Activated CD4-positive, alpha-beta memory T cell treated with anti-CD3 and anti-CD28 coated beads for 36 hours (primary cell): ENCODE measurements at regions of chr11 and their contacts with region 1.

Region 1: GRCh38 chr11:102614485-102614884 is 10.6 kb downstream of the MMP20 start:
- DNase-seq: no peak
- H3K4me3 Mint-ChIP-seq: no peak overlapping the region
- H3K27ac Mint-ChIP-seq: no peak overlapping the region
- H3K4me1 Mint-ChIP-seq: peaks cover 10% of the 10 kb centered on the region
- H3K27me3 Mint-ChIP-seq: no peaks in the 10 kb centered on the region

Region 2: GRCh38 chr11:102268329-102269193 is 345.9 kb before region 1 on chr11:
- CTCF ChIA-PET with region 1: interaction called, 4 read pairs
- POLR2A ChIA-PET with region 1: interaction called, 5 read pairs
- intact Hi-C with region 1: loop called (anchors 5 kb)
- DNase-seq: peak; percentile 92
- H3K4me3 Mint-ChIP-seq: peak overlapping the region; percentile 24
- H3K27ac Mint-ChIP-seq: no peak overlapping the region
- H3K4me1 Mint-ChIP-seq: peaks cover 31% of the 10 kb centered on the region
- H3K27me3 Mint-ChIP-seq: no peaks in the 10 kb centered on the region

Region 3: GRCh38 chr11:102495161-102496042 is 119.1 kb before region 1 on chr11:
- CTCF ChIA-PET with region 1: interaction called, 23 read pairs
- POLR2A ChIA-PET with region 1: no interaction called
- intact Hi-C with region 1: loop called (anchors 2 kb)
- DNase-seq: peak; percentile 22
- H3K4me3 Mint-ChIP-seq: no peak overlapping the region
- H3K27ac Mint-ChIP-seq: no peak overlapping the region
- H3K4me1 Mint-ChIP-seq: peaks cover 18% of the 10 kb centered on the region
- H3K27me3 Mint-ChIP-seq: peaks cover 7% of the 10 kb centered on the region

Region 4: DNA sequence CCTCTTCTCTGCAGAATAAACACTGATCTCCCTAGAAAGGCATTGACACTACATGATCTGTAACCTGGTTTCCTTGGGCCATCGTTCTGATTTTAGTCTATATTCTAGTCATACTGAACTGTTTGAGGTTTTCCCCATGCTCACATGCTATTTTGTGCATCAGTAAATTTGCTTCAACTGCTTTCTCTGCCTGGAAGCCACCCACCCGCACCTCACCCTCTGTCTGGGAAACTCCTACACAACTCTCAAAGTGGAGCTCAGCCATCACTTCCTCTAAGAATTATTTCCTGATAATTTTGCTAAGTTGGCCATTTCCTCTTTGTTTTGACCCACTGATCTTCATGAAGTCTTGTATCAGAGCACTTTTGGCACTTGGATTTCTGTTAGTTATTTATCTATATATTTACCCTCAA is 25.4 kb before region 1 on chr11:
- CTCF ChIA-PET with region 1: interaction called, 9 read pairs
- POLR2A ChIA-PET with region 1: no interaction called
- intact Hi-C with region 1: loop called (anchors 2 kb)
- DNase-seq: peak; percentile 77
- H3K4me3 Mint-ChIP-seq: no peak overlapping the region
- H3K27ac Mint-ChIP-seq: peak overlapping the region; percentile 38
- H3K4me1 Mint-ChIP-seq: peaks cover 22% of the 10 kb centered on the region
- H3K27me3 Mint-ChIP-seq: peaks cover 1% of the 10 kb centered on the region

Region 5: DNA sequence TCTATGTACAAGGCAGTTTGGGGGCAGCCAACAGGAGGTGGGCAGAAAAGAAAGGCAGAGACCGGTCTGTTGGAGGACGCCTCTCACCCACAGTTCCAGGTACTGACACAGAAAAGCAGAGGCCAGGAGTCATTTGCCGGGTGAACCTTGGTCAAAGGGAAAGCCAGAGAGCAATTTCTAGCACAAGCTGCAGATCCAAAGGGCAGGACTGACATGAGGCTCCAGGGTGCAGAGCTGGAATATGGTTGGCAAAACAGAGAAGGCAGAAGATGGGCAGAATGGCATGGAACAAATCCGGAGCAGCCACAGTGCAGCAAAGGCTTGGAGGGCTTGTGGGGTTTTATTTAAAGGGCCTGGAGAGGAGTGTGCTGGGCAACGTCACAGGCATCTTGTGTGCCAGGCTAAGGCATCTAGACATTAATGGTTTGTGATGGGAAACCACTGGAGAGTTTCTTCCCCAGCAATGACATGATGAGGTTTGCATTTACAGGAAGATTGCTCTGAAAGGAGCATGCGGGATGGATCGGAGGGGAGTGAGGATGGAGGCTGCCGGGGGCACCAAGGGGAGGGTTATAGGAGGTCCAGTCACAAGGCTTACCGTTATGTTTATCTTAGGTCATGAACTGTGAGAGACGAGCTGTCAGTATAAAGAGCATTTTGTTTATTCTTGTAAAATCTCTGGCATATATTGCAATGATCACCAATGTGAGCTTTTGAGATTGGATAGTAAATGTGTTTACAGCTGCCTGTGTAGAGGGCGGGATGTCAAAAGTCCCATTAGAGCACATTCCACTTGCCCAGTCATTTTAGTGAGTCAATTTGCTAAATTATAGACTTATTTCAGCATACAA is 16.3 kb after region 1 on chr11:
- CTCF ChIA-PET with region 1: no interaction called
- POLR2A ChIA-PET with region 1: no interaction called
- intact Hi-C with region 1: no loop called
- DNase-seq: no peak
- H3K4me3 Mint-ChIP-seq: no peak overlapping the region
- H3K27ac Mint-ChIP-seq: no peak overlapping the region
- H3K4me1 Mint-ChIP-seq: no peaks in the 10 kb centered on the region
- H3K27me3 Mint-ChIP-seq: peaks cover 5% of the 10 kb centered on the region

Region 6: GRCh38 chr11:102666331-102666957 is 52.0 kb after region 1 on chr11:
- CTCF ChIA-PET with region 1: interaction called, 18 read pairs
- POLR2A ChIA-PET with region 1: no interaction called
- intact Hi-C with region 1: loop called (anchors 10 kb)
- DNase-seq: peak; percentile 15
- H3K4me3 Mint-ChIP-seq: no peak overlapping the region
- H3K27ac Mint-ChIP-seq: no peak overlapping the region
- H3K4me1 Mint-ChIP-seq: no peaks in the 10 kb centered on the region
- H3K27me3 Mint-ChIP-seq: no peaks in the 10 kb centered on the region

Region 7: GRCh38 chr11:102794447-102794781 is 179.9 kb after region 1 on chr11:
- CTCF ChIA-PET with region 1: no interaction called
- POLR2A ChIA-PET with region 1: no interaction called
- intact Hi-C with region 1: no loop called
- DNase-seq: peak; percentile 23
- H3K4me3 Mint-ChIP-seq: no peak overlapping the region
- H3K27ac Mint-ChIP-seq: no peak overlapping the region
- H3K4me1 Mint-ChIP-seq: no peaks in the 10 kb centered on the region
- H3K27me3 Mint-ChIP-seq: peaks cover 1% of the 10 kb centered on the region